Transverse colon (tissue), 4 donors: ENCODE measurements at regions of chr9 and their contacts with region 1.

Region 1: DNA sequence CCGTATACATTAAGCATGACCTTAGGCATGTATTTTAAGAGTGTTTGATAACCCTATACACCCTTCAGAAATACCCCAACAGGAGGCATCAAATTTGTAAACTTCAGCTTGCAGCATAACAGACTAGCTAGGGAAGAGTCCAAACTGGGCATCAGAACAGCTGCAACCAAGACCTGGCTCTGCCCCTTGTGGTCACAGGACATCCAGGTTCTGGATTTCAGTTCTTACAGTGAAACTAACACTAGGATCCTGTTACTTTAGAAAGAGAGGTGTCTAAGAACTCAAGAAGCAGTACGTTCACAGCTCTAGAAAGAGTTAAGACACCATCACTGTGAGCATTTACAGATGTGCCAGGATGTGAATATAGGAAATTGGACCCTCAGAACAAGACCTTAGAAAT is 229.8 kb downstream of the BNC2 start:
- DNase-seq: no peak
- H3K4me3 ChIP-seq: no peak overlapping the region
- H3K27ac ChIP-seq: no peak overlapping the region
- H3K4me1 ChIP-seq: peaks cover 0 to 7% (median 0%) of the 10 kb centered on the region in 4 donors
- H3K27me3 ChIP-seq: no peaks in the 10 kb centered on the region
- CTCF ChIP-seq: peak in 1 of 5 experiments; percentile 14
- EP300 ChIP-seq: no peak
- POLR2A ChIP-seq: no peak

Region 2: GRCh38 chr9:16871356-16872151 is 230.9 kb after region 1 on chr9:
- in situ Hi-C with region 1: no loop called
- intact Hi-C with region 1: loop called (anchors 5 kb)
- DNase-seq: peak; percentile 44
- H3K4me3 ChIP-seq: peak overlapping the region; percentile 61 to 90 (median 70)
- H3K27ac ChIP-seq: peak overlapping the region; percentile 82 to 93 (median 90)
- H3K4me1 ChIP-seq: peaks cover 3 to 29% (median 5%) of the 10 kb centered on the region in 4 donors
- H3K27me3 ChIP-seq: peaks cover 45% of the 10 kb centered on the region
- CTCF ChIP-seq: peak in 1 of 5 experiments; percentile 6
- EP300 ChIP-seq: no peak
- POLR2A ChIP-seq: no peak